Kidney (tissue), 22 donors: ENCODE measurements at regions of chr7 and their contacts with region 1.

Region 1: DNA sequence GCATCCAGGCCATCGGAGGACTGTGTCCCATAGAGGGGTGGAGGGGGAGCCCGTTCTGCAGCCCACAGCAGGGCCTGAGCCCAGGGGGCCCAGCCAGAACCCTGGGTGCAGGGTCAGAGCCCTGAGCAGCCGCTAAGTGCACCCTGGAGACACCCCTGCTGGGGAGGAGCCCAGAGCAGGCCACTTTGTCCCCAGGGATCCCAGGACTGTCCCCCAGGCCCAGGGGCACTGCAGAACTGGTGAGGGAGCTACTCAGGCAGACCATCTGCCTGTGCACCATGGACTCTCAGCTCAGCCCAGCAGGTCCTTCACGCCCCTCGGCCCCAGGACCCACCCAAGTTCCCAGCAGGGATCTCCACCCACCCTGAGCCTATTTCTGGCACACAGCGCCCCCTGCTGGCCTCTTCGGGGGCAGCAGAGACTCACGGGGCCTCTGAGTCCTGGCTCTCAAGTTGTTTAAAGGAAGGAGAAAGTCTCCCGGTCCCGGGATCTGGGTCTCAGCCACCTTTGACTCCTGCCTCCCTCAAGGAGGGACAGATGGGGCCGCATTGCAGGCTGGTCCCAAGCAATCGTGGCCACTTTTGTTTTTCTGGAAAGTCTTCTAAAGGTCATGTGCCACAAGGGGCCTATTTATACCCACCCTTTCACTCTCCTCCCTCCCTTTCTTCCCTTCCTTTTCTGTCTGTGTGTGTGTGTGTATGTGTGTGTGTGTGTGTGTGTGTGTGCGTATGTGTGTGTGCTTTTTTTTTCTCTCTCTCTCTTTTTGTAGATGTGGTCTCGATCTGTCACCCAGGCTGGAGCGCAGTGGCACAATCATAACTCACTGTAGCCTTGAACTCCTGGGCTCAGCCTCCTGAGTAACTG is 90.3 kb downstream of the MYL10 start:
- DNase-seq: peak in 4 of 5 donors; percentile 77 to 88 (median 81)
- H3K4me3 ChIP-seq: no peak overlapping the region
- H3K27ac ChIP-seq: no peak overlapping the region
- H3K4me1 ChIP-seq: no peaks in the 10 kb centered on the region
- H3K27me3 ChIP-seq: no peaks in the 10 kb centered on the region
- CTCF ChIP-seq: peak; percentile 72

Region 2: GRCh38 chr7:101363734-101364374 is 175.0 kb before region 1 on chr7:
- intact Hi-C with region 1: loop called (anchors 10 kb)
- DNase-seq: peak; percentile 82 to 89 (median 84)
- H3K4me3 ChIP-seq: peak overlapping the region in 2 of 3 donors; percentile 36 to 48
- H3K27ac ChIP-seq: no peak overlapping the region
- H3K4me1 ChIP-seq: peaks cover 0 to 3% (median 0%) of the 10 kb centered on the region in 3 donors
- H3K27me3 ChIP-seq: no peaks in the 10 kb centered on the region
- CTCF ChIP-seq: peak; percentile 58